SK-N-SH (cell line): ENCODE measurements at regions of chr4 and their contacts with region 1.

Region 1: GRCh38 chr4:6546681-6547447 is 28.1 kb upstream of the MAN2B2 start:
- DNase-seq: peak; percentile 85
- H3K4me3 ChIP-seq: peak overlapping the region in 1 of 2 experiments; percentile 26; a peak in 1 of 4 replicates
- H3K27ac ChIP-seq: no peak overlapping the region
- H3K4me1 ChIP-seq: peaks cover 0 to 20% of the 10 kb centered on the region in 2 experiments; a peak in 1 of 4 replicates
- H3K27me3 ChIP-seq: no peaks in the 10 kb centered on the region
- CTCF ChIP-seq: peak; percentile 93
- EP300 ChIP-seq: no peak
- RAD21 ChIP-seq: peak; percentile 84

Region 2: DNA sequence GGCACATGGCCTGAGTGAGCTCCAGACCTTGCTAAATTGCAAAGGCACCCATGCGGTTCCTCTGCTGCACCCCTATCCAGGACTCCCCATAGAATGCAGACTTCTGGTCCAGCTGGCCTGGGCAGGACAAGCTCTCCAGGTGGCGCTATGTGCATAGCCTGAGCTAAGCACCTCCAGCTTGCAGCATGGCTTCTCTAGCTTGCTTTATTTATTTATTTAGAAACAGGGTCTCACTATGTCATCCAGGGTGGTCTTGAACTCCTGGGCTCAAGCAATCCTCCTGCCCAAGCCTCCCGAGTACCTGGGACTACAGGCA is 282.7 kb before region 1 on chr4:
- CTCF ChIA-PET with region 1: interaction called, 15 read pairs
- POLR2A ChIA-PET with region 1: no interaction called
- DNase-seq: peak; percentile 69
- H3K4me3 ChIP-seq: no peak overlapping the region
- H3K27ac ChIP-seq: no peak overlapping the region
- H3K4me1 ChIP-seq: peaks cover 0 to 5% of the 10 kb centered on the region in 2 experiments; a peak in 1 of 4 replicates
- H3K27me3 ChIP-seq: no peaks in the 10 kb centered on the region
- CTCF ChIP-seq: peak; percentile 58
- EP300 ChIP-seq: no peak
- RAD21 ChIP-seq: peak; percentile 89

Region 3: GRCh38 chr4:6402566-6403398 is 144.1 kb before region 1 on chr4:
- CTCF ChIA-PET with region 1: interaction called, 18 read pairs
- POLR2A ChIA-PET with region 1: no interaction called
- DNase-seq: no peak
- H3K4me3 ChIP-seq: no peak overlapping the region
- H3K27ac ChIP-seq: no peak overlapping the region
- H3K4me1 ChIP-seq: peaks cover 0 to 13% of the 10 kb centered on the region in 2 experiments; a peak in 2 of 4 replicates
- H3K27me3 ChIP-seq: no peaks in the 10 kb centered on the region
- CTCF ChIP-seq: no peak
- EP300 ChIP-seq: no peak
- RAD21 ChIP-seq: no peak

Region 4: GRCh38 chr4:6500481-6501140 is 46.3 kb before region 1 on chr4:
- CTCF ChIA-PET with region 1: interaction called, 11 read pairs
- POLR2A ChIA-PET with region 1: no interaction called
- DNase-seq: no peak
- H3K4me3 ChIP-seq: no peak overlapping the region
- H3K27ac ChIP-seq: no peak overlapping the region; a peak in 1 of 4 replicates
- H3K4me1 ChIP-seq: no peaks in the 10 kb centered on the region; a peak in 1 of 4 replicates
- H3K27me3 ChIP-seq: no peaks in the 10 kb centered on the region
- CTCF ChIP-seq: no peak
- EP300 ChIP-seq: no peak
- RAD21 ChIP-seq: no peak

Region 5: GRCh38 chr4:6534618-6535328 is 12.1 kb before region 1 on chr4:
- CTCF ChIA-PET with region 1: interaction called, 17 read pairs
- POLR2A ChIA-PET with region 1: no interaction called
- DNase-seq: no peak
- H3K4me3 ChIP-seq: no peak overlapping the region
- H3K27ac ChIP-seq: no peak overlapping the region
- H3K4me1 ChIP-seq: no peaks in the 10 kb centered on the region
- H3K27me3 ChIP-seq: no peaks in the 10 kb centered on the region; the same call in 1 of the 2 replicates
- CTCF ChIP-seq: no peak
- EP300 ChIP-seq: no peak
- RAD21 ChIP-seq: no peak